ENCODE measurements at regions of chr3 and their contacts with region 1.

Region 1: DNA sequence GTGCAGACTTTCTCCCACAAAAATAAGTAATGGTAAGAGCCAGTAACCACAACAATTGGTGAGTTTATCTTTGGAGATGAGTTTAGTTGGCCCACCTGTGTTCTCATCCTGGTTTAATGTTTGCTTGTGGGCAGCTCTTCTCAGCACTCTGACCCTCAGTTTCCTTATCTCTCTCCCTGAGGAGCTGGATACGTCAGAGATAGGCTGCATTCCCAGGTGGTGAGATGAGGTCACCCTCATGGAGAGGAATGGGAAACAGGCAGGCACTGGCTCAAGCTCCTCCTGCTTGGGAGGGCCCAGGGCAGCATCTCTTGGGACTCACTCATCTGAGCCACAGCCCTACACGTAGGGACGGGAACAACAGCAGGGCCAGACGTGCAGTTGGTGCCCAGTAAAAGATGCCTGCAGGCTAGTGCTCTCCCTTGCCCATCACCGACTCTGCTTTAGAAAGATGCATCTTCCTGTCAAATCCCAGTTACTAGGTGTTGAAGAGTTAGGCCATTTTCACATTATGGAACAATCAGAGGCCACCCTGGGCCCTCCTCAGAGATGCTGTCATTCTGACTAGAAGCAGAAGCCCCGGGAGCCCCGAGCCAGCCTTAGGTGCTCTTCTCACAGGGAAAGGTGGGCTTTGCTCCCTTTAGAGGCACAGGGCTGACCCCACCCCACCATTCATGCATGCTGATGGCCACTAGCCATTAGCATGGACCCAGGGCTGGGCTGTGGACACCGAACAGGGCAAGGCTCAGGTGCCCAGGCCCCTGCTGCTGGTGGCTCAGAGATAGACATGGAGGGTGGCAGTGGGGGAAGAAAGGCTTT is 59.7 kb downstream of the GRIP2 start:
- DNase-seq: no peak

Region 2: GRCh38 chr3:14439579-14440518 is 40.6 kb before region 1 on chr3:
- intact Hi-C with region 1: loop called (anchors 5 kb)
- DNase-seq: peak; percentile 92

Region 3: GRCh38 chr3:14451844-14452678 is 28.4 kb before region 1 on chr3:
- intact Hi-C with region 1: no loop called
- DNase-seq: no peak

Region 4: GRCh38 chr3:14730703-14731382 is 250.4 kb after region 1 on chr3:
- intact Hi-C with region 1: no loop called
- DNase-seq: no peak

Measured in cardiac septum (tissue), 1 donor.